HepG2 (cell line): ENCODE measurements at regions of chr4 and their contacts with region 1.

Region 1: DNA sequence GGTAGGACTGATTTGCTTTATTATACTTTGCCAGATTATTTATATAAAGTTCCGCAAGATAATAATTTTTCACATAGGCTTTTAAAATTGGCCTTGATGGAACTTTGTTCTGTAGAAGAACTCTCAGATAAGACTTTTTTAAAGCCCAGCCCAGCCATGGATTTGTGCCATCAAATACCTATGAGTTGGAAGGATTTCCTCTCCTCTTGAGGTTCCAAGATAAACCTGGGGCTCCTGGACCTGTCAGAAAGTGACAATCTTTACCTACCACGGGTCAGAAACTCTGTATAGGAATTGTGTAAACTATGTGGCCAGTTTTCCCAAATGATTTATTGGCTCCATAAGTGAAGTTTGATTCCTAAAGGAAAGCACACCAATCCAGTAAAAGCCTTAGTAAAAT is 271.9 kb upstream of the GRID2 start:
- DNase-seq: no peak
- ATAC-seq: no peak
- H3K4me3 ChIP-seq: no peak overlapping the region
- H3K27ac ChIP-seq: no peak overlapping the region
- H3K4me1 ChIP-seq: no peaks in the 10 kb centered on the region
- H3K27me3 ChIP-seq: no peaks in the 10 kb centered on the region
- CTCF ChIP-seq: no peak
- EP300 ChIP-seq: no peak
- POLR2A ChIP-seq: no peak
- RAD21 ChIP-seq: no peak

Region 2: DNA sequence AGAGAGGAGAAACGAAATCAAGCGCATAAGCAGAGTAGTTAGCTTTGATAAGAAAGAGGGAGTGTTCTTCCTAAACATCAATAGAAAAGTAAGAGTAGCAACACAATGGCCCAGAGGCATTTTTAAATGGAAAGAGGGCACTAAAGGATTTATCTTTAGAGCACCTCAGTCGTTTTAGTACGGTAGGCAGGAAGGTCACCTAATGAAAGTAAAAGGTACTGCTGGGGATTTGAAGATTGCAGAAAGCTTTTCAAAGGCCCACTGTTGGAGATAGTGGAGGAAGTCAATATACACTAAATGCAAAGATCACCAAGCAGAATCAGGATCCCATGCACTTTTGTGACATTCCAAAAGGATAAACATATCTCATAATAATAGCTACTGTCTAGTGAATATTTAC is 395.7 kb before region 1 on chr4:
- CTCF ChIA-PET with region 1: no interaction called
- POLR2A ChIA-PET with region 1: no interaction called
- in situ Hi-C with region 1: no loop called
- intact Hi-C with region 1: loop called (anchors 5 kb)
- DNase-seq: no peak
- ATAC-seq: no peak
- H3K4me3 ChIP-seq: no peak overlapping the region
- H3K27ac ChIP-seq: no peak overlapping the region
- H3K4me1 ChIP-seq: no peaks in the 10 kb centered on the region
- H3K27me3 ChIP-seq: no peaks in the 10 kb centered on the region
- CTCF ChIP-seq: no peak
- EP300 ChIP-seq: no peak
- POLR2A ChIP-seq: no peak
- RAD21 ChIP-seq: no peak

Region 3: GRCh38 chr4:92111493-92111892 is 79.7 kb after region 1 on chr4:
- CTCF ChIA-PET with region 1: no interaction called
- POLR2A ChIA-PET with region 1: no interaction called
- in situ Hi-C with region 1: no loop called
- intact Hi-C with region 1: no loop called
- DNase-seq: no peak
- ATAC-seq: no peak
- H3K4me3 ChIP-seq: no peak overlapping the region
- H3K27ac ChIP-seq: no peak overlapping the region
- H3K4me1 ChIP-seq: no peaks in the 10 kb centered on the region
- H3K27me3 ChIP-seq: no peaks in the 10 kb centered on the region
- CTCF ChIP-seq: no peak
- EP300 ChIP-seq: no peak
- POLR2A ChIP-seq: no peak
- RAD21 ChIP-seq: no peak